Aorta (tissue), 5 donors: ENCODE measurements at regions of chr19 and their contacts with region 1.

Region 1: DNA sequence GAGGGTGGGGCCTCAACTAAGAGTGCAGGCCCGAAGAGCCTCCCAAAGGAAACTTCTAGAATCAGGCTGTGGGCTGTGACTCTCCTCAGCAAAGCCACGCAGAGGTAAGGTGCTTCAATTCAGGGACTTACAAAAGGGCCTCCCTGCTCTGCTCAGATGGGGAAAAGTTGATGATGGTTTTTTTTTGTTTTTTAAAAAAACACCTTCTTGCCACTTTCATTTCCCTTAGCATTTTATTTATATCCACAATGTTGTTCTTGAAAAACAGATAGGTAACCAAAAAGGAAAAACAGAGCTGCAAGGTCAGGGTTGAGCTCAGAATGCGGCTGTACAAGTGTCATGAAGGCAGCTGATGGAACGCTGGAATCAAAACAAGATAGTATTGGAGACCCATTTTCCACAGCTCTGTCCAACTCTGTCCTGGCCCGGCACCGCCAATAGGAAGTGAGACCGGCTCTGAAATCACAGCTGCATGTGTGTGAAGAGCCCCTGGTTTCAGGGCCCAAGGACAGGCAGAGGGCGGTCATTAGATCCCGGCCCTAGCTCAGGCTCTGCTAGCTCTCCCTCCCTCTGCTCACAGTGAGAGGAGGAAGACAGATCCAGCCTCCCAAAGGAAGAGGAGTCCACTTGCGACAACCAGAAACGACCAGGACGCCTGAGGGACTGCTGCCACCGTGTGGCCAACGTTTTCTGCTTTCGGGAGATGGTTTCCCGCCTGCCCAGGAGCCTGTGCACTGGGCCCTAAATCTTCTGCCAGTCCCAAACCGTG is 58.3 kb downstream of the KLF2 start:
- DNase-seq: peak; percentile 92 to 97
- ATAC-seq: peak; percentile 83
- H3K4me3 ChIP-seq: no peak overlapping the region
- H3K27ac ChIP-seq: peak overlapping the region; percentile 85 to 95
- H3K4me1 ChIP-seq: no peaks in the 10 kb centered on the region
- H3K27me3 ChIP-seq: no peaks in the 10 kb centered on the region

Region 2: GRCh38 chr19:16197622-16198369 is 185.2 kb before region 1 on chr19 and contains the start of gene AP1M1:
- intact Hi-C with region 1: loop called in 1 of 2 experiments (anchors 5 kb)
- DNase-seq: peak; percentile 99 to 100
- ATAC-seq: peak; percentile 95
- H3K4me3 ChIP-seq: peak within 1 kb of the TSS; percentile 55 to 90
- H3K27ac ChIP-seq: peak within 1 kb of the TSS in 1 of 2 donors; percentile 88
- H3K4me1 ChIP-seq: no peaks in the 10 kb centered on the region
- H3K27me3 ChIP-seq: no peaks in the 10 kb centered on the region
- total RNA-seq, gene AP1M1: 74.7 TPM

Region 3: DNA sequence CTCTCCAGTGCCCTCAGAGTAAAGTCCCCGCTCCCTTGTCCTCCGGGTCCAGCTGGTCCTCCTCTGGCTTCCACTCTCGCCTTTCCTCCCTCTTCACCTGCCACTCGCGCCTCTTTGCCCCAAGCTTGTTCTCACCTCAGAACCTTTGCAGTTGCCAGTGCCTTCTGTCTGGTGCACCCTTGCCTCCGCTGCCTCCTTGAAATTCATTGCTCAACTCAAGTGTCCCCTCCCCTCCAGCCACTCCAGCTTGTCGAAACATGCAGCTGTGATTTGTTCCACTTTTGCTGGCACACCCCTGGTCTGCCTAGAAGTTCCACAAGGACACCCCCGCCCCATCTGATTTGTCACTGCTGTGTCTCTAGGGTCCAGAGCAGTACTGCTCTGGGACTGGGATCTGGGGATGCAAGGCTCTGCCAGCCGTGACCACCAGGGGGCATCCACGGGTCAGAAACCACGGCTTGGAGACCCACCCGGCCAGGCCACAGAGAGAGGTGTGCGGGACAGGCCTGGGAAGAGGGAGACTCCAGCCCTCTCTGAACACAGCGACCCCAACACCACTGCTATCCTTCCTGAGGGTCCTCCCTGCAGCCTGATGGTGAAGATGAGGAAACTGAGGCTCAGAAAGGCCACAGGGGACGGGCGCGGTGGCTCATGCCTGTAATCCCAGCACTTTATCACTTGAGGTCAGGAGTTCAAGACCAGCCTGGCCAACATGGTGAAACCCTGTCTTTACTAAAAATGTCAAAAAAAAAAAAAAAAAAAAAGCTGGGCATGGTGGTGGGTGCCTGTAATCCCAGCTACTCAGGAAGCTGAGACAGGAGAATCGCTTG is 135.4 kb before region 1 on chr19:
- intact Hi-C with region 1: loop called (anchors 1 kb)
- DNase-seq: peak; percentile 89 to 97
- ATAC-seq: peak; percentile 94
- H3K4me3 ChIP-seq: no peak overlapping the region
- H3K27ac ChIP-seq: no peak overlapping the region
- H3K4me1 ChIP-seq: no peaks in the 10 kb centered on the region
- H3K27me3 ChIP-seq: no peaks in the 10 kb centered on the region

Region 4: GRCh38 chr19:16330368-16330801 is 52.6 kb before region 1 on chr19:
- intact Hi-C with region 1: loop called in 1 of 2 experiments (anchors 2 kb)
- DNase-seq: peak; percentile 84 to 94
- ATAC-seq: peak; percentile 17
- H3K4me3 ChIP-seq: no peak overlapping the region
- H3K27ac ChIP-seq: no peak overlapping the region
- H3K4me1 ChIP-seq: no peaks in the 10 kb centered on the region
- H3K27me3 ChIP-seq: no peaks in the 10 kb centered on the region

Region 5: GRCh38 chr19:16338470-16339360 is 44.2 kb before region 1 on chr19:
- intact Hi-C with region 1: loop called (anchors 2 kb)
- DNase-seq: peak; percentile 84 to 86
- ATAC-seq: peak; percentile 30
- H3K4me3 ChIP-seq: no peak overlapping the region
- H3K27ac ChIP-seq: peak overlapping the region; percentile 55 to 58
- H3K4me1 ChIP-seq: peaks cover 0 to 2% of the 10 kb centered on the region in 2 donors
- H3K27me3 ChIP-seq: no peaks in the 10 kb centered on the region

Region 6: DNA sequence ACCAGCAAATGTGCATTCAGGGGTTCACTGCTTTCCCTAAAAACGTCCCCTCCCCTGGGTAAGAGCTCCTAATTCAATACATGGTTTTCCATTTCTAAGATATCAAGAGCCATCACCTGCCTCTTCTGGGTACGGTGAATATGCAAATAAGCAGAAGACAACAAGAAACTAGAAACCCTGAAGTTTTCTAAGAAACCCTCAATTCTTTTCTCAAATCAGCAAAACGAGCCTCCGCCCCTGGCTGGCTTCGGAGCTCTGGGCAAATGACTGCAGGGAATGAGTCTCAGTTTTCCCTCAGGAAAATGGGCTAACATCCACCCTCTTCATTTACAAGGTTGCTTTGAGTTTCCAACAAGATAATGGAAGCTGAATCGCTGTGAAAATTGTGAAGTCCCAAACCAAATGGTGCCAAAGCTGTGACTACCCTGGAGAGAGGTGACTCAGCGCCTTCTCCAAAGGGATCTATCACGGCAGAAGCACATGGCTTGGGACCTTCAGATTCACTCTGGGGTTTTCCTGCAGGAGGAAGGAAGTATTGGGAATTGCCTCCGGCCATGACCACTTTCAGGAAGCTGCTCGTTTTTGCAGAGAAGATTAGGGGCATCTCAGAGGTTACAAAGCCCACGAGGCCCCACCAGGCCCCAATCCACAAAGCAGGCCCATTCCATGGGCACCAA is 31.7 kb before region 1 on chr19:
- intact Hi-C with region 1: no loop called
- DNase-seq: no peak
- ATAC-seq: no peak
- H3K4me3 ChIP-seq: no peak overlapping the region
- H3K27ac ChIP-seq: no peak overlapping the region
- H3K4me1 ChIP-seq: no peaks in the 10 kb centered on the region
- H3K27me3 ChIP-seq: no peaks in the 10 kb centered on the region